ENCODE measurements at regions of chr16 and their contacts with region 1.

Region 1: DNA sequence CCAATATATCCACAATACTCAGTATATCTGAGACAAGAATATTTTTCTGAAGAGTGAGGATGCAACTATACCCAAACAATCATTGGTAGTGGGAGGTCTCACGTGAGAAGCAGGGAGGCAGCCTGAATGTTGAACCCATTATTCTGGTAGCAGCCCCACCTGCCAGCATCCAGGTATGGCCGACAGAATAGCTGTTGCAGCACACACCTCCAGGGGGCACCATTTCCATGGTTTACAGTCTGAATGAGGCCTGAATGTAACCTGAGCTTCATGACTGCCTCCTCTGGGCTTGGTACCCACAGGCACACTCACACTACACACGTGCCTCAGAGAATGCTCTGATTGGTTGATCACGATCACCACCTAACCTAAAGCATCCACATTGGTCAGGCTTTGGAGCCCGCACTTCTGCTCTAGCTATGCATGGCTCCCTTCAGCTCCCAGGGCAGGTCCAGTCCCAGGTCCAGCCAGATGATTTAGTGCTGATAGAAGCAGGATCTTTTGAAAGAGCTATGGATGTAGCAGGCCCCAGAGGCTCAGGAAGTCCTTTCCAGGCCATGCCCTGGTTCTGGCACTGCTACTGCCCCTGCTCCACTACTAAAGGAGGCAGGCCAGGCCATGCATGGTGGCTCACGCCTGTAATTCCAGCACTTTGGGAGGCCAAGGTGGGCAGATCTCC is 11.0 kb upstream of the CBFB start:
- DNase-seq: peak; percentile 89
- H3K4me3 ChIP-seq: no peak overlapping the region
- H3K27ac ChIP-seq: peak overlapping the region in 1 of 2 experiments; percentile 11; a peak in 1 of 4 replicates
- H3K4me1 ChIP-seq: peaks cover 11 to 14% of the 10 kb centered on the region in 2 experiments; a peak in 2 of 4 replicates
- H3K27me3 ChIP-seq: no peaks in the 10 kb centered on the region
- CTCF ChIP-seq: peak; percentile 89
- EP300 ChIP-seq: no peak
- RAD21 ChIP-seq: peak; percentile 98

Region 2: GRCh38 chr16:66660422-66661209 is 357.3 kb before region 1 on chr16:
- CTCF ChIA-PET with region 1: no interaction called
- POLR2A ChIA-PET with region 1: no interaction called
- DNase-seq: peak; percentile 72
- H3K4me3 ChIP-seq: peak overlapping the region in 1 of 2 experiments; percentile 8; a peak in 2 of 4 replicates
- H3K27ac ChIP-seq: peak overlapping the region; percentile 88 to 89
- H3K4me1 ChIP-seq: peaks cover 20 to 26% of the 10 kb centered on the region in 2 experiments
- H3K27me3 ChIP-seq: no peaks in the 10 kb centered on the region
- CTCF ChIP-seq: peak; percentile 48
- EP300 ChIP-seq: peak in 1 of 2 experiments; percentile 22; a peak in 3 of 4 replicates
- RAD21 ChIP-seq: peak; percentile 27; the same call in 1 of the 2 replicates

Region 3: GRCh38 chr16:66894948-66895688 is 122.8 kb before region 1 on chr16:
- CTCF ChIA-PET with region 1: interaction called, 11 read pairs
- POLR2A ChIA-PET with region 1: no interaction called
- DNase-seq: peak; percentile 76
- H3K4me3 ChIP-seq: no peak overlapping the region; a peak in 1 of 4 replicates
- H3K27ac ChIP-seq: no peak overlapping the region
- H3K4me1 ChIP-seq: peaks cover 9 to 11% of the 10 kb centered on the region in 2 experiments; a peak in 3 of 4 replicates
- H3K27me3 ChIP-seq: no peaks in the 10 kb centered on the region
- CTCF ChIP-seq: peak; percentile 89
- EP300 ChIP-seq: no peak
- RAD21 ChIP-seq: peak; percentile 98

Region 4: DNA sequence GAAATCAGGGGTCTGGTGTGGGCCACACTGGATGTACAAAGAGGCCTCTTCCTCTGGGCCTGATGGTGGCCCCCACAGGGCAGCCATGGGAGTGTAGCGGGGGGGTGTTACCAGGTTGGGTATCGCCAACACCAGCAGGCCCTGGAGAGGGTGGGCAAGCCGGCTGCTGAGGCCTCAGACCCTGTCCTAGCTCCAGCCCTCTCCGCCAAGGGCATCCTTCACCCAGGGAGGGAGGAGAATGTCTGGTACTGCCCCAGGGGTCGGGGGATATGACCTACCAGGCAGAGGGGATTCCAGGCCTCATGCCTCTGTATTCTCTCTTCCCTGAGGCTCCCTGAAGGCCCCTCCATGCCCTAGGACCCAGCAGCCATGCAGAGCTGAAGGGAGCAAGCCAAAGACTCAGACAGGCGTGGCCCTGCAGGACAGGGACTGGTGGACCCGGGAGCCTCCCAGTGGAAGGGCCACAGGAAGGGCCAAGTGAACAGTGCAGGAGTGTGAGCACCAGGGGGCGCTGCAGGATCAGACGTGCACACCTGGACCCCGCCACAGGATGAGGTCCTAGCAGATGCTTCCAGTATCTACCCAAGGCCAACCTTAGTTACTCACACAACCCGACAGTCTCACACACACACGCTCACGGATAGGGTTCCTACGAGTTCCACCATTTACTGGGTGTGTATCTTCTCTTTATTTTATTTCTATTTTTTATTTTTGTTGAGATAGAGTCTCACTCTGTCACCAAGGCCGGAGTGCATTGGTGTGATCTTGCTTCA is 40.4 kb before region 1 on chr16:
- CTCF ChIA-PET with region 1: interaction called, 25 read pairs
- POLR2A ChIA-PET with region 1: no interaction called
- DNase-seq: peak; percentile 94
- H3K4me3 ChIP-seq: peak overlapping the region in 1 of 2 experiments; percentile 46; a peak in 1 of 4 replicates
- H3K27ac ChIP-seq: no peak overlapping the region
- H3K4me1 ChIP-seq: no peaks in the 10 kb centered on the region; a peak in 1 of 4 replicates
- H3K27me3 ChIP-seq: no peaks in the 10 kb centered on the region
- CTCF ChIP-seq: peak; percentile 93
- EP300 ChIP-seq: no peak
- RAD21 ChIP-seq: peak; percentile 99

Region 5: DNA sequence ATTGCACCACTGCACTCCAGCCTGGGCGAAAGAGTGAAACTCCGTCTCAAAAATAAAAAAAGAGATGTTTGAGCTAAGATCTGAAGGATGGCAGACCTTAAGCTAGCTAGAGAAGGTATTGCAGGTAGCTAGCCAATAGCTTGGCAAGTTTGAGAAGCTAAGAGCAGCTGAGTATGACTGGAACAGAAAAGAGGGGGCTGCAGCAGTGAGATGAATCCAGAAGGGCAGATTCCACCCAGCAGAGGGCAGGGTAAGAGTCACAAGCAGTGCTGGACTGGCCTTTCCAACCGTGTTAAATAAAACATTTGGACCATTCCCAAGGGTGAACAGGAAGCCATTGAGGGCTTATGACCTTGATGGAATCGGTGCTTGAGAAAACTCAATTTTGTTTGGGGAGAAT is 86.1 kb after region 1 on chr16:
- CTCF ChIA-PET with region 1: interaction called, 87 read pairs
- POLR2A ChIA-PET with region 1: interaction called, 6 read pairs
- DNase-seq: peak; percentile 37
- H3K4me3 ChIP-seq: no peak overlapping the region
- H3K27ac ChIP-seq: no peak overlapping the region
- H3K4me1 ChIP-seq: peaks cover 0 to 8% of the 10 kb centered on the region in 2 experiments; a peak in 1 of 4 replicates
- H3K27me3 ChIP-seq: no peaks in the 10 kb centered on the region
- CTCF ChIP-seq: peak; percentile 60
- EP300 ChIP-seq: no peak
- RAD21 ChIP-seq: peak; percentile 11; the same call in 1 of the 2 replicates

Region 6: DNA sequence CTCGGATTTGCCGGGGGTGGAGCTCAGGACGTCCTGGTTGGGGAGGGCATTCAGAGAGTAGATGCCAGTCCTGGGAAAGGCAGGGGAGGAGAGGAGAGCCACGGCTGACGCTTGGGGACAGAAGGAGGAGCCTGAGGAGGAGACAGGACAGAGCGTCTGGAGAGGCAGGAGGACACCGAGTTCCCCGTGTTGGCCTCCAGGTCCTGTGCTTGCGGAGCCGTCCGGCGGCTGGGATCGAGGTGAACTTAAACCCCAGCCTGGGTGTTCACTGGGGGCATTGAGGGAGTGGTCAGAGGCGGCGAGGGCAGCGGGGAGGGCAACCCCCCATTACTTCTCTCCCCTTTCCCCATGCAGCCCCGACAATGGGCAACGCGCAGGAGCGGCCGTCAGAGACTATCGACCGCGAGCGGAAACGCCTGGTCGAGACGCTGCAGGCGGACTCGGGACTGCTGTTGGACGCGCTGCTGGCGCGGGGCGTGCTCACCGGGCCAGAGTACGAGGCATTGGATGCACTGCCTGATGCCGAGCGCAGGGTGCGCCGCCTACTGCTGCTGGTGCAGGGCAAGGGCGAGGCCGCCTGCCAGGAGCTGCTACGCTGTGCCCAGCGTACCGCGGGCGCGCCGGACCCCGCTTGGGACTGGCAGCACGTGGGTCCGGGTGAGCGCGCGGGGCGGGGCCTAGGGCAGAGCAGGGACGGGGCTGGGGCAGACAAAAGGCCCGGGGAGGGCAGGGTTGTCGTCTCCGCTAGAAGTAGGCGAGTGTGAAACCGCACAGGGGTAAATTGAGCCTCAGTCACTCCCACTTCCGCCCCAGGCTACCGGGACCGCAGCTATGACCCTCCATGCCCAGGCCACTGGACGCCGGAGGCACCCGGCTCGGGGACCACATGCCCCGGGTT is 156.1 kb after region 1 on chr16:
- CTCF ChIA-PET with region 1: interaction called, 10 read pairs
- POLR2A ChIA-PET with region 1: interaction called, 3 read pairs
- DNase-seq: peak; percentile 90
- H3K4me3 ChIP-seq: peak overlapping the region; percentile 45 to 60
- H3K27ac ChIP-seq: peak overlapping the region; percentile 67 to 86
- H3K4me1 ChIP-seq: peaks cover 39 to 60% of the 10 kb centered on the region in 2 experiments; a peak in 3 of 4 replicates
- H3K27me3 ChIP-seq: no peaks in the 10 kb centered on the region
- CTCF ChIP-seq: no peak; the same call in 1 of the 2 replicates
- EP300 ChIP-seq: no peak
- RAD21 ChIP-seq: peak; percentile 16; the same call in 1 of the 2 replicates

Region 7: DNA sequence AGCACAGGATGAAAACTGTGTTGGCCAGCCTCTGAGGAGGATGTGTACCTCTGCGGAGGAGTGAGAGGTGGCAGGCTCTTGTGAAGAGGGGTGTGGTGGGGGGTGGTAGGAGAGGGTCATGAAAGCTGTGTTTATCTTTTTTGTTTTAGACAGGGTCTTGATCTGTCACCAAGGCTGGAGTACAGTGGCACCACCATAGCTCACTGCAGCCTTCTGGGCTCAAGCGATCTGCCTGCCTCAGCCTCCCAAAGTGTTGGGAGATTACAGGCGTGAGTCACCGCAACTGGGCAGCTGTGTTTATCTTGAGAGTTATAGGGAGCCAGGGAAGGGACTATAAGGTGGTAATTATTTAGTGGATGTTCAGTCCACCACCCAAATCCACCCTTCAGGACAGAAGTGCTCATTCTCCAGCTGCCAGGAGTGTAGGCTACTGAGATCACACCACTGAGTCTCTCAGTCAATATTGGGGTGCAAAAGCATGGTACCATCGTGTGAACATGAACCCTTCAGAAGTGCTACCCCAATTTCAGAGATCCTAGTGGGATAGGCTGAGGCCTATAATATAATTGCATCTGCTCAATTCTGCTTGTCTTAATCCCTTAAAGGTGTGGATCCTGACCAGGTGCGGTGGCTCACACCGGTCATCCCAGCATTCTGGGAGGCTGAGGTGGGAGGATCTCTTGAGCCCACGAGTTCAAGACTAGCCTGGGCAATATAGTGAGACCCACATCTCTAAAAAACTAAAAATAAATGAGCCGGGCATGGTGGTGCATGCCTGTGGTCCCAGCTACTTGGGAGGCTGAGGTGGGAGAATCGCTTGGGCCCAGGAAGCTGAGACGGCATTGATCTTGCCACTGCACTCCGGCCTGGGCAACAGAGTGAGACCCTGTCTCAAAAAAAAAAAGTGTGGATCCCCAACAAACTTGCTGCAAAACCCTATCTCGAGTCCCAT is 172.8 kb after region 1 on chr16:
- CTCF ChIA-PET with region 1: interaction called, 12 read pairs
- POLR2A ChIA-PET with region 1: no interaction called
- DNase-seq: no peak
- H3K4me3 ChIP-seq: no peak overlapping the region
- H3K27ac ChIP-seq: no peak overlapping the region
- H3K4me1 ChIP-seq: peaks cover 22 to 27% of the 10 kb centered on the region in 2 experiments
- H3K27me3 ChIP-seq: no peaks in the 10 kb centered on the region
- CTCF ChIP-seq: no peak
- EP300 ChIP-seq: no peak
- RAD21 ChIP-seq: no peak

Measured in SK-N-SH (cell line).